ENCODE measurements at regions of chr20 and their contacts with region 1.

Region 1: DNA sequence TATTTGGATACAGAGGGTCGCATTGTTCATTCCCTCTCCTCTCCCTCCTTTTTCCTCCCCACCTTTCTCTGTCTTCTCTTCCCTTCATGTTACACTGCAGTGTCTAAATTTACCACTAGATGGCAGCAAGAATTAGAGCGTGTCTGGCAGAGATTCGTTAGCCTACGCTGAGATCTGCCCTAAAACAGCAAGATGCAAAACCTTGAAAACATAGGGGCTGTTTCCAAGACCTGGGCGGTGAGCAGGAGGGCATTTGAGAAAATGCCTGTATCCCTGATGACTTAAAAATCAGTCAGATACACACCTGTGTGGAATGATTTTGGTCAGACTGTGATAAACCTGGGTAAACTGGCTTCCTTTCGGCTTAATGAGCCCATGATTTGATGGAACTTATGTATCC is 101.5 kb upstream of the ISM1 start:
- DNase-seq: peak; percentile 26
- H3K4me3 Mint-ChIP-seq: no peak overlapping the region
- H3K27ac Mint-ChIP-seq: no peak overlapping the region
- H3K4me1 Mint-ChIP-seq: no peaks in the 10 kb centered on the region
- H3K27me3 Mint-ChIP-seq: peaks cover 2% of the 10 kb centered on the region

Region 2: GRCh38 chr20:13251106-13251903 is 131.7 kb after region 1 on chr20:
- CTCF ChIA-PET with region 1: no interaction called
- POLR2A ChIA-PET with region 1: no interaction called
- DNase-seq: no peak
- H3K4me3 Mint-ChIP-seq: no peak overlapping the region
- H3K27ac Mint-ChIP-seq: no peak overlapping the region
- H3K4me1 Mint-ChIP-seq: peaks cover 25% of the 10 kb centered on the region
- H3K27me3 Mint-ChIP-seq: peaks cover 4% of the 10 kb centered on the region

Region 3: DNA sequence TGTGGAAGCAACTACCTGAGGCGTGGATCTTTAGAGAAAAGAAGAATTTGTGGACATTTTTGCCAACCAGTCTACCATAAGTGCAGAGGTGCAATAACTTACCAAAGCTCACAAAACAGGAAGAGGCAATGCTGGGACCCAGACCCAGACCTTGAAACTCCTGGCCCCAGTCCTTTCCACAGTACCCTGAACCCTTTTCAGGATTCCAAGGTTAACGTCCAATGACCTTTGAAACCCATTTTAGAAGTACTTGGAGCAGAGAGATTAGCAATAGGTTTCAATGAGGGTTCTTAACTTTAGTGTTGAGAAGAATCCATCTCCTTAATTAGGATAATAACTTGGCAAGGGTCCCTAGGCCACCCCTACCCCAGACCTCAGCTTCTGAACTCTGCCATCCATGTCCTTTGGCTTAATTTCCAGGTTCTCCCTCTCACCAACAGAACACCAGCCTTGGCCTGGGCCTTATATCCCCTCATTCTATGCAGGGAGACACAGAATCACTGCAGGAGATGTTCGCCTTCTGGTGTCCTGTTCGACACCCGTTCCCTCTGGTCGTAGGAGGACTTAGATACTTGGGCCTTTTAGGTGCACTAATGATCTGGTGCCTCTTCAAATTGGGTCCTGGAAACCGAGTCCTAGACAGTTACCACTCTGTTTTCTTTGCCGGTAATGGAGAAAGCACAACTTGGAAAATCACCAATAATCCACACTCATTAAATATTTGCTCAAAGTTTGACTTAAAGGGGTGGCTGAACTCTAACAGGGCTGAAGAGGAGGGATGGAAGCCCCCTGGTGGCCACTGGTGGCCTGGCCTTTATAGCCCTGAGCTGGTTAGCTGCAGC is 142.1 kb after region 1 on chr20:
- CTCF ChIA-PET with region 1: interaction called, 11 read pairs
- POLR2A ChIA-PET with region 1: no interaction called
- DNase-seq: peak; percentile 52
- H3K4me3 Mint-ChIP-seq: no peak overlapping the region
- H3K27ac Mint-ChIP-seq: no peak overlapping the region
- H3K4me1 Mint-ChIP-seq: no peaks in the 10 kb centered on the region
- H3K27me3 Mint-ChIP-seq: no peaks in the 10 kb centered on the region

Region 4: DNA sequence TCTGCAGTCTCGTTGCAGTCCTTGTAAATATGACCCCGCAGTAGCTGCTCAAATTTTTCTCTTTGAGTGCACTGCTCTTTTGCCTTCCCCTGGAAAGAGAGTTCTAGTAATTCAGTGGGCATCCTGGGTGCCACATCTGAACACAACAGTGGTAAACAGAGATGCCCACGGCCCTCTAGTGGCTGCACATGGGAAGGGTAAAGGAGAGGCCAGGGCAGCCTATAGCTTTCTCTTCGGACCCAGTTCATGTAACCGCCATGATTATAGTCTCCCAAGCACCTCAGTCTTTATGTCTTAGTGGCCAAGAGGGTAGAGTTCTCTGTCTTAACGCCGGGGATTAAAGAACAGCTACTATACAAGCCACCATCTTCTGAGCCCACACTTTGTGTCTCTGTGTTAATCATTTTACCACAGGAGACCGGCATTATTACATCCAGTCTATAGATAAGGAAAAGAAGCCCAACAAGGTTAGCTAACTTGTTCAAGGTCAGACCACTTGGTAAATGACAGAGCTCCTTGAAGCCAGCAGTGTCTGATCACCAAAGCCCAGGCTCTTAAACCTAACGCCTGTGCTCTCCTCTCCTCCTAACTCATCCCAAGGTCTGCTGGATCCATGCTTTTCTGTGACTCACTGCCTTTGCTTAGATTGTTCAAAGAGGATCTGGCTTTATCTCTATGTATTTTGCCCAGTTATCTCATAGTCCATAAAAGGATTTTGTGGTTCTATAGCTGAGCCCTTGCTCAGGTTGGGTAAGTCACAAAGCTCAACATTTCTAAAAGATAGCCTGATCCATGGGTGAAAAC is 183.3 kb after region 1 on chr20:
- CTCF ChIA-PET with region 1: interaction called, 13 read pairs
- POLR2A ChIA-PET with region 1: no interaction called
- DNase-seq: peak; percentile 45
- H3K4me3 Mint-ChIP-seq: no peak overlapping the region
- H3K27ac Mint-ChIP-seq: no peak overlapping the region
- H3K4me1 Mint-ChIP-seq: no peaks in the 10 kb centered on the region
- H3K27me3 Mint-ChIP-seq: peaks cover 3% of the 10 kb centered on the region

Region 5: GRCh38 chr20:13363473-13363872 is 243.9 kb after region 1 on chr20:
- CTCF ChIA-PET with region 1: no interaction called
- POLR2A ChIA-PET with region 1: no interaction called
- DNase-seq: no peak
- H3K4me3 Mint-ChIP-seq: no peak overlapping the region
- H3K27ac Mint-ChIP-seq: no peak overlapping the region
- H3K4me1 Mint-ChIP-seq: no peaks in the 10 kb centered on the region
- H3K27me3 Mint-ChIP-seq: no peaks in the 10 kb centered on the region